ENCODE measurements at regions of chr20 and their contacts with region 1.

Region 1: GRCh38 chr20:16064989-16065707 is 508.1 kb downstream of the KIF16B start:
- DNase-seq: no peak
- H3K4me3 ChIP-seq: no peak overlapping the region
- CTCF ChIP-seq: no peak
- POLR2A ChIP-seq: no peak

Region 2: GRCh38 chr20:15799869-15800268 is 265.3 kb before region 1 on chr20:
- intact Hi-C with region 1: loop called (anchors 5 kb)
- DNase-seq: no peak
- H3K4me3 ChIP-seq: no peak overlapping the region
- CTCF ChIP-seq: no peak
- POLR2A ChIP-seq: no peak

Measured in lower leg skin (tissue), 4 donors.